GM10248 (cell line): ENCODE measurements at regions of chr22 and their contacts with region 1.

Region 1: GRCh38 chr22:41403532-41404318 is 22.0 kb downstream of the TEF start:
- DNase-seq: peak; percentile 95
- CTCF ChIP-seq: peak; percentile 94

Region 2: GRCh38 chr22:41327124-41327523 is 76.6 kb before region 1 on chr22:
- CTCF ChIA-PET with region 1: no interaction called
- POLR2A ChIA-PET with region 1: no interaction called
- DNase-seq: no peak
- CTCF ChIP-seq: no peak

Region 3: DNA sequence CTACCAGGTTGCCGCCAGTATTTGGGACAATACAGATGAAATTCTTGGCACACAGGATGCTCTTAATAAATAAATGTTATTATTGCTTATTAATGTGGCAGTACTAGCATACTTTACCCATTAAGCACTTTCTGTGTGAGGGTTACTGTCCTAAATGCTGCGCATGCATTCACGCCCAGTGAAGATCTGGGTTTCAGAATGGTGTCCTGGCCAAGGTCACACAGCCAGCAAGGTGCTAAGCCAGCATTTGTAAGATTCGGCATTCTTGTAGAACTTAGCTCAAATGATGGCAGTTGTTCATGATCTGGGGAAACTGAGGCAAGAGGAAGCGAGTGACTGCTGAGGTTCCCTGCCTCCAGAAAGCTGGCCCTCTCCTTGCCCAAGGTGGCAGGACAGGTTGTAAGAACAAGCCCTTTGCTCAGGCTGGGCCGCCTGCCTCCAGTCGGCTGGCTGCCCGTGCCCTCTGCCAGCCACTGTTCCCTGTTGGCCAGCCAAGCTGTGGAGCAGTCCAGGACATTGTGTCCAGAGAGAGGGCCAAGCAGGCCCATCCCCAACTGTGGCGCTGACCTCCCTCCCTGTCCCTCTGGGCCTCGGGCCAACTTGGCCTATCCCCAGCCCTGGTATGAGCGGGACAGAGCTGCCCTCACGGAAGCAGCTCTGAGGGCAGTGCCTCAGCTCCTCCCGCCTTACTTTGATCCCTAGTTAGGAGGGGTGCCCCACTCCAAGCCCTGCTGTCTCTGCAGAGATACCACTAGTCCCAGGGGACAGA is 14.1 kb after region 1 on chr22:
- CTCF ChIA-PET with region 1: interaction called, 11 read pairs
- POLR2A ChIA-PET with region 1: interaction called, 3 read pairs
- DNase-seq: no peak
- CTCF ChIP-seq: no peak

Region 4: DNA sequence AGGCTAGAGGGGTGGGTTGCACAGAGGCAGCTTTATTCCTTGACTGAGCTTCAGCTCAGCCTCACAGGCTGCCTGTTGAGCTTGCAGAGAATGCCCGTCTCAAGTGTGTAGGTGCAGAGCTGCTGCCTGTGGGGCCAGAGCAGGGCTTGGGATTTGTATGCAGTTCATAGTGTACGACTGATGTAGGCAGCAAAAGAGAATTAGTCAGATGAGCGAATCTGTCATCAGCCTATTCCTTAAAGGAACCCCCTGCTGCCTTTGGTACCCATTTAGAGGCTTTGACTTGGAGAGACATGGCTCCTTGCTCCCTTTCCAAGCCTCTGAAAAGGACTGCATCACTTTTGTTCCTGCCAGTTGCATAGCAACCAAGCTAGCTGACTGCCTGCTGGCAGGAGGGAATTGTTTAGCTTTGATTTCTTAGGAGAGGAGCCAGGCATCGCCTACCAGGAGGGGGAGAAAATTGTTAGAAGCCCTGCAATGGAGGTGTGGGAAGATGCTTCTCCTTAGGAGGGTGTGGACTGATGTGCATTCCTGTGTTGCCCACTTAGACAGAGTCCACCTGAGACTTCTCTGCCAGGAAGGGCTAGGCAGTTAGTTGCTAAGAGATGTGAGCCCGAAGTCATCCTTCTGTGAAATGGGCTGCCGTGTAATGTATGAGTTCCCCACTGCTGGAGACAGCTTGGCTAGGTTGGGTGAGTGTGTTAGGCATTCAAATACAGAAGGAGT is 76.1 kb after region 1 on chr22:
- CTCF ChIA-PET with region 1: interaction called, 42 read pairs
- POLR2A ChIA-PET with region 1: no interaction called
- DNase-seq: no peak
- CTCF ChIP-seq: no peak

Region 5: GRCh38 chr22:41517172-41518047 is 113.7 kb after region 1 on chr22:
- CTCF ChIA-PET with region 1: interaction called, 109 read pairs
- POLR2A ChIA-PET with region 1: interaction called, 3 read pairs
- DNase-seq: peak; percentile 68
- CTCF ChIP-seq: peak; percentile 73

Region 6: GRCh38 chr22:41596776-41597634 is 193.3 kb after region 1 on chr22:
- CTCF ChIA-PET with region 1: interaction called, 17 read pairs
- POLR2A ChIA-PET with region 1: no interaction called
- DNase-seq: peak; percentile 45
- CTCF ChIP-seq: peak; percentile 71